Naive thymus-derived CD4-positive, alpha-beta T cell (primary cell): ENCODE measurements at regions of chr2 and their contacts with region 1.

Region 1: DNA sequence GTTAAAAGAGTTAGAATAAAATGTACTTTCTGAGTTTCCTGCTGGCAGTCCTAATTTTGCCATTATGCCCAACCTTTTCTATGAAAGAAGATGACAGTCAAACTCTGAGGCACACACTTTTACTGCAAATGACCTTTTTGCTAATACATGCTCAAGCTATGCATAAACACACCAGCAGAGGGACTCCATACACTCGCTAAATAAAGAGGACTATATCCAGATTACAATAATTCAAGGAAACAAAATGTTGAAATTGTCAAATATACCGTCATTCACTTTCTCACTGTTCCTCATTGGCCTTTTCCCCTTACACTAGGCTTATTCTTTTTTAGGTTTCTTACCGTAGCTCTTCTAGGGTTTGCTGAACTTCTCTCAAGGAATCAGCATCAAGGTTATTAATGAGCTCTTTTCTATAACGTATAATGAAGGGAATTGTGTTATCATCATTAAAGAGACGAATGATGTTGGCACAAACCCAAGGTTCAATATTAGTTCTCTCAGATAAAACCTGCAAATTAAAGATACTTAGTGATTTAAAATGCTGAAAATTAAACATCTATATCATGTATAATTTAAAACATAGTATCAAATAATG is 25.7 kb downstream of the SRBD1 start:
- DNase-seq: peak in 4 of 9 donors; percentile 19 to 31 (median 26)
- ATAC-seq: peak; percentile 84
- H3K4me3 ChIP-seq: no peak overlapping the region
- H3K4me3 Mint-ChIP-seq: no peak overlapping the region
- H3K27ac ChIP-seq: no peak overlapping the region
- H3K27ac Mint-ChIP-seq: no peak overlapping the region
- H3K4me1 ChIP-seq: peaks cover 0 to 5% of the 10 kb centered on the region in 2 donors
- H3K4me1 Mint-ChIP-seq: peaks cover 15 to 31% (median 25%) of the 10 kb centered on the region in 7 donors
- H3K27me3 ChIP-seq: no peaks in the 10 kb centered on the region
- H3K27me3 Mint-ChIP-seq: no peaks in the 10 kb centered on the region

Region 2: DNA sequence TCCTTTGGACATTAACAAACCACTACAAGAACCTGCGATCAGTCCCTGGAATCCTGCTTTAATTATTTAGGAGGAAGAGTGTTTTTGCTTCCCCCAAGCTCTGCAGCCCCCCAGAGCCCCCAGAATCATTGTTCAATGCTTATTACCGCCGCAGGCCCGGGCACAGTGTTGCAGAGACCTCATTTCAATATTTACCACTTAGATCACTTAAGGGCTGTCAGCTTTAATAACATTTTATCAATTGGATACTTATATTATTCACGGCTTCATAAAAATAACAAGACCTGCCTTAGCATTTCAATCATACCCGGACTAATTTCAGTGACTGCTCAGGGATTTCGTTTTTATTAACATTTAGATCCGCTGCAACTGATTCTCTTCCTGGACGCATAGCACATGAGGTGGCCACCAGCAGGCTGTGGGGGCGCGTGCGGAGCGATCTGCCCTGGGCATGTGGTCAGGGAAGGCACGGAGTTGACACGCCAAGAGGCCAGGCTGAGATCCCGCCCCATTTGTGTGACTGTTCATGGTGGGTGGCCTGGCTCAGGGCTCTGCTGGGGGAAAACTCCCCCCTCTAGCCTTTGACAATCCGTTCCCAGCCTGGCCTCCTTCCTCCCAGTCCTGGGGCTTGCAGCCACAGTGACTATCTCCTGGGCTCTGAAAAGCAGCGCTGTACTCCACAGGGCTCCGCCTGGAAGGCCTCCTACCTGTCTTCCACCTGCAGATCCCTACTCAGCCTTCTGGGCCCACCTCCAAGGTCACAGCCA is 241.9 kb before region 1 on chr2:
- CTCF ChIA-PET with region 1: no interaction called
- POLR2A ChIA-PET with region 1: no interaction called
- intact Hi-C with region 1: no loop called
- DNase-seq: no peak
- ATAC-seq: no peak
- H3K4me3 ChIP-seq: no peak overlapping the region
- H3K4me3 Mint-ChIP-seq: no peak overlapping the region
- H3K27ac ChIP-seq: no peak overlapping the region
- H3K27ac Mint-ChIP-seq: no peak overlapping the region
- H3K4me1 ChIP-seq: no peaks in the 10 kb centered on the region
- H3K4me1 Mint-ChIP-seq: no peaks in the 10 kb centered on the region
- H3K27me3 ChIP-seq: no peaks in the 10 kb centered on the region
- H3K27me3 Mint-ChIP-seq: peaks cover 4 to 28% (median 9%) of the 10 kb centered on the region in 5 donors

Region 3: DNA sequence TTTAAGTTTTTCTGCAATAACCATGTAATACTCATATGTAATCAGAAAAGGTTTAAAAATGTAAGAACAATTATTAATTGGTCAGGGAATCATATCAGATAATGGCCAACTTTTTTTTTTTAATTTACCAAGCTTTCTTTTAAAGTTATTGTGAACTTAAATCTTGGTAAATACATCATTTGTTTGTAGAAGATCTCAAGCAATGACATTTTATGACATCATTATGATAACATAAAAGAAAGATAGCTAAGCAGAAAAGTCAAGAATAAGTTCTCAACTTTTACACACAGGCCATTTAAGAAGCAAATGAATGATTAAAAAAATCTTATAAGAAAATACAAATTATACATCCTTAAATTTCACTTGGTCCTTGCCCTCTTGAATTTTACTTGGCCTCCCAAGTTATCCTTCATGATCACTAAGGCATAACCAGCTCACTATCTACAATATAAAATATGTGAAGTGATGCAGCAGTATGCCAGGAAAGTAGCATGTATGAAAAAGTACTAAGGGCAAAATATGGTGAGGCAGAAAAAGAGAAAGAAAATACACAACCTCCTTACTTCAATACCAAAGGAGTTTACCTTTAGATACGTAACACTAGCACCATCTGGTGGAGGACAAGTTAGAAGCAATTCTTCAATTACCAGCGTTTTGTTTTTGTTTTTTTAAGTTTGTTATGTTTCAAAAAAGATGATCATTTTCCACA is 90.9 kb before region 1 on chr2:
- CTCF ChIA-PET with region 1: no interaction called
- POLR2A ChIA-PET with region 1: no interaction called
- intact Hi-C with region 1: loop called in 1 of 2 experiments (anchors 2 kb)
- DNase-seq: peak in 6 of 9 donors; percentile 17 to 46 (median 28)
- ATAC-seq: peak; percentile 65
- H3K4me3 ChIP-seq: no peak overlapping the region
- H3K4me3 Mint-ChIP-seq: no peak overlapping the region
- H3K27ac ChIP-seq: no peak overlapping the region
- H3K27ac Mint-ChIP-seq: peak overlapping the region in 2 of 9 donors; percentile 23 to 33
- H3K4me1 ChIP-seq: no peaks in the 10 kb centered on the region
- H3K4me1 Mint-ChIP-seq: peaks cover 3 to 17% (median 10%) of the 10 kb centered on the region in 7 donors
- H3K27me3 ChIP-seq: no peaks in the 10 kb centered on the region
- H3K27me3 Mint-ChIP-seq: no peaks in the 10 kb centered on the region

Region 4: DNA sequence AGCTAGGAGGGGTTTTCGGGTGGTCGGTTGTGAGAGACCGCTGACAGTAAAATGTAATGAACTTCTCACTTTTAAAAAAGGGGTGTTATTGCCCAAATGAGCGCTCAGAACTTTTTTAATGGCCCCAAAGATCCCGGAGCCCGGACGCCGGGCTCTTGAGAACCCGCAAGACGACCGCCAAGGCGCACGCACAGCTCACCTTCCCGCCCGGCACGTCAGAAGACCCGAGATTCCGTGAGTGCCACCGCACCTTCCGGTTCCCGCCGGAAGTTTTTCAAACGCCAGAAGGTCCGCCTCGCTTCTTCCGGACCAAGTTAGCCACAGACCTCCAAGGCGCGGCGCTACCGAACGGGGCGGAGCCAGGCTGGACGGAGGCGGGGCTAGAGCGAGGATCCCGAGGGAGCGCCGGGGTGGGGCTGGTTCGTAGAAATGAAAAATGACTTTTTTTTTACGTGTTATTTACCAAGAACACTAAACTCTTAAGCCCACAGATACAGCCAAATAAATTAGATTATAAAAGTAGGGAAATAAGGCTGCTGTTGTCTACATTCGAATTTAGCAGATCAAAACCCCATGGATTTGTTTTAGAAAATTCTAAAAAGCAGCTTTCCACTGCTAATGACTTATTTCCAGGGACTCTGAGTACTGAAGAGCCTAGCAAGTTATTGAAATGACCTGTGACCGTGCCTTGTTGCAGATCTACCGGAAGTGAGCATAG is 25.8 kb after region 1 on chr2 and contains the start of gene SRBD1:
- CTCF ChIA-PET with region 1: interaction called, 7 read pairs
- POLR2A ChIA-PET with region 1: interaction called, 3 read pairs
- intact Hi-C with region 1: loop called (anchors 1 kb)
- DNase-seq: peak; percentile 52 to 91 (median 75)
- ATAC-seq: peak; percentile 91
- H3K4me3 ChIP-seq: peak within 1 kb of the TSS; percentile 79
- H3K4me3 Mint-ChIP-seq: peak within 1 kb of the TSS; percentile 92 to 99 (median 96)
- H3K27ac ChIP-seq: peak within 1 kb of the TSS; percentile 78
- H3K27ac Mint-ChIP-seq: peak within 1 kb of the TSS; percentile 90 to 98 (median 96)
- H3K4me1 ChIP-seq: peaks cover 0 to 7% of the 10 kb centered on the region in 2 donors
- H3K4me1 Mint-ChIP-seq: peaks cover 13 to 47% (median 28%) of the 10 kb centered on the region in 7 donors
- H3K27me3 ChIP-seq: no peaks in the 10 kb centered on the region
- H3K27me3 Mint-ChIP-seq: no peaks in the 10 kb centered on the region
- total RNA-seq, gene SRBD1: 17.7 to 28.1 (median 23.3) TPM